Gastrocnemius medialis (tissue), 4 donors: ENCODE measurements at regions of chr12 and their contacts with region 1.

Region 1: DNA sequence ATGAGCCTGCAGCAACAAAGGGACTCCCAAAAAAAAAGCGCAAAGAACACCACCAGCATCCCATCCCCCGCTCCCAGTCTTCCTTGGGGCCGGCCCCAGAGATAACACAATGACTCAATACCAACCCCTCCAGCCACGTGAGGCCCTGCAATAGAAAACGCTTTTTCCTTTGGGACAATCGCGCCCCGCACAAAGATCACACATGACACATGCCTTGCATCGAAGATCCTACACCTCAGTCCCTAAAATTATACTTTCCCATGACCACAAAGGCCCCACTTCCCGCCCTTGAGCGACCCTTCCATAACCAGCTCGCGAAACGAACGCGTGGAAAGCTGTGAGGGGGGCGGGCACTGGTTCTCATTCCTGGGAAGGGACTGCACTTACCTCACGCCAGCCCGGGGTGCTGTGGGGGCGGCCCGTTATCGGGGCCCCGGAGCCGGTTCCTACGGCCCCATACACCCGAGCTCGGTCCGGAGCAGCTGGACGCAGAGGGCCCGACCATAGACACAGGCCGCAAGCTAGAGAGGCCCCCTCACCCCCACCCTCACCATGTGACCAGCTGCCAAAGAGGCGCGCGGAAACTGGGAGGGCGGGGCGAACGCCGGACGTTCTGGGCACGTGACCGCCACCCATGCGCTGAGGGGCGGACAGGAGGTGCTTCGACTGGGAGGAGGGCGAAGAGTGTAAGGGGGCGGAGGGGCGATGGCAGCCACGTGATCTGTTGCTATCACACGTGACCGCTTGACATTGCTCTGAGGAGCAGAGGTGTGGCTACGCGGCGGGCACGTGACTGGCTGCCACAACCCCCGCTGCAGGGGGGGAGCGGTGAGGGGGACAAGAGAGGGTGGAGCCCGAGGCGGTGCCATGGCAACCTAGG is at the start of gene CDK4:
- DNase-seq: peak; percentile 99 to 100
- ATAC-seq: peak; percentile 87 to 88
- H3K4me3 ChIP-seq: peak within 1 kb of the TSS; percentile 74 to 95 (median 80)
- H3K27ac ChIP-seq: peak within 1 kb of the TSS; percentile 94 to 98 (median 96)
- H3K4me1 ChIP-seq: peaks cover 23 to 27% of the 10 kb centered on the region in 2 donors
- H3K27me3 ChIP-seq: no peaks in the 10 kb centered on the region
- CTCF ChIP-seq: peak in 1 of 5 experiments; percentile 24
- POLR2A ChIP-seq: peak; percentile 85 to 90
- total RNA-seq, gene CDK4: 39.7 to 55.5 (median 47.4) TPM

Region 2: DNA sequence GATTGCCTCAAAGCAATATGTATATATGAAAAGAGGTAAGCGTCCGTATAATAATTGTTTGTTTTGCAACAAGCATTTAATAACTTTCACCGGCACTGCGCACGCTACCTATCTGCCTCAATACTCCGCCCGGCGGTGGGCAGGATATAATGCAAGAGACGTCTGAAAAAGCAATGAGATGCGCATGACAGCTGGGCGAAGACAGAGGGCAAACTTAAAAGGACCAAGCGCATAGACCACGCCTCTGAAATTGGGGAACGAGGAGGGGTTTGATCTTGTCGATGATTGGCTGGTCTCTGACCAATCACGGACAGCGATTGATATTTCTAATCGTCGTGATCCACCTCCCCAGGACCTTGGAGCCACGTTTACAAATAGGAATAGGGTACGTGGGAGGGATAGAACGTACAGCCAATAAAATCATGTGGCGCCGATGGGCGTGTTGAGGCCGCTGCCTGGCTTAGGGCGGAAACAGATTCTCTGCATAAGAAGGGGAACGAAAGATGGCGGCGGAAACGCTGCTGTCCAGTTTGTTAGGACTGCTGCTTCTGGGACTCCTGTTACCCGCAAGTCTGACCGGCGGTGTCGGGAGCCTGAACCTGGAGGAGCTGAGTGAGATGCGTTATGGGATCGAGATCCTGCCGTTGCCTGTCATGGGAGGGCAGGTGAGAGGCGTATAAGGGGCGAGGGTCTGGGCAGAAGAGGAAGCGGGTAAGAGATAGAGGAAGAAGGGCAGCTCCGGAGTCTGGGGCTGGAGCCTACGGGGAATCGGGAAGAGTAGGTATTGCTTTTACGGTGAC is 58.2 kb before region 1 on chr12 and contains the start of gene OS9:
- in situ Hi-C with region 1: no loop called
- intact Hi-C with region 1: loop called (anchors 1 kb)
- DNase-seq: peak; percentile 99
- ATAC-seq: peak; percentile 98 to 99
- H3K4me3 ChIP-seq: peak within 1 kb of the TSS; percentile 68 to 97 (median 79)
- H3K27ac ChIP-seq: peak within 1 kb of the TSS; percentile 77 to 90 (median 86)
- H3K4me1 ChIP-seq: peaks cover 7% of the 10 kb centered on the region in 2 donors
- H3K27me3 ChIP-seq: peaks cover 0 to under 1% (median 0%) of the 10 kb centered on the region in 3 donors
- CTCF ChIP-seq: peak; percentile 75 to 84 (median 78)
- POLR2A ChIP-seq: peak; percentile 71 to 73
- total RNA-seq, gene OS9: 77.0 to 152 (median 106) TPM

Region 3: DNA sequence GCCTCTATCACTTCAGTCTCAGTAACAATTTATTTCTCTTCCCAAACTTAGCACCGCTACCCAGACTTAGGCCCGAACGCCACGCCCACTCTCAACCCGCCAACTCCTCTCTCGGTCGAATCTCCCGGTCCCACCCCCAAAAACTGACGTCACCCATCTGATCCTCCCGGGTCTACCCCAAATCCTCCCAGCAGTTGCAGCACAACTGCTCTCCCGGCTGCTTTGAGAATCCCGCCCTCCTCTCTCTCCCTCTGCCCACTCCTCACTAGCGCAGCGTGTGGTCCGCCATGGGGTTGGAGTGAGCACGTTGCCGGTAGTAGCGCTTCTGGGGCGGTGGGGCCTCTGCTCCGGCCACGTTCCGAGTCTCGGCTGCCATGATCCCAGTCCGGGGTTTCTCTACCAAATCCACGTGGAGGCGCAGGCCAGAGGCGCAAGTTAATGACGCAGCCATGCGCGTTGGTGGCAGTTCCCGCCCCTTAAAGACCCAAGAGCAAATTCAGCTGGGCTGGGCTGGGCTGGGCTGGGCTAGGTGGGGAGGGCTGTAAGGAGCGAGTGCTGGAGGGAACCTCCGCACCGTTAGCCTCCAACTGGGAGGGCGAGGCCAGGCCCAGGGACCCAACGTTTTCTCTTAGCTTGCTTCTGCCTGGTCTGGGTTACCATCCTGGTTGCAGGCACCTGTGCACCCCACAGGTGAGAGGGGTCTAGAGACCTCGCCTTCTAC is 19.8 kb after region 1 on chr12 and contains the start of gene METTL1:
- in situ Hi-C with region 1: no loop called
- intact Hi-C with region 1: loop called (anchors 2 kb)
- DNase-seq: peak; percentile 89 to 92
- ATAC-seq: peak; percentile 92 to 97
- H3K4me3 ChIP-seq: peak within 1 kb of the TSS; percentile 79 to 97 (median 90)
- H3K27ac ChIP-seq: peak within 1 kb of the TSS; percentile 84 to 94 (median 87)
- H3K4me1 ChIP-seq: peaks cover 18 to 20% of the 10 kb centered on the region in 2 donors
- H3K27me3 ChIP-seq: peaks cover 2 to 4% (median 4%) of the 10 kb centered on the region in 3 donors
- CTCF ChIP-seq: no peak
- POLR2A ChIP-seq: peak; percentile 44 to 45
- total RNA-seq, gene METTL1: 6.5 to 22.7 (median 17.9) TPM

Region 4: DNA sequence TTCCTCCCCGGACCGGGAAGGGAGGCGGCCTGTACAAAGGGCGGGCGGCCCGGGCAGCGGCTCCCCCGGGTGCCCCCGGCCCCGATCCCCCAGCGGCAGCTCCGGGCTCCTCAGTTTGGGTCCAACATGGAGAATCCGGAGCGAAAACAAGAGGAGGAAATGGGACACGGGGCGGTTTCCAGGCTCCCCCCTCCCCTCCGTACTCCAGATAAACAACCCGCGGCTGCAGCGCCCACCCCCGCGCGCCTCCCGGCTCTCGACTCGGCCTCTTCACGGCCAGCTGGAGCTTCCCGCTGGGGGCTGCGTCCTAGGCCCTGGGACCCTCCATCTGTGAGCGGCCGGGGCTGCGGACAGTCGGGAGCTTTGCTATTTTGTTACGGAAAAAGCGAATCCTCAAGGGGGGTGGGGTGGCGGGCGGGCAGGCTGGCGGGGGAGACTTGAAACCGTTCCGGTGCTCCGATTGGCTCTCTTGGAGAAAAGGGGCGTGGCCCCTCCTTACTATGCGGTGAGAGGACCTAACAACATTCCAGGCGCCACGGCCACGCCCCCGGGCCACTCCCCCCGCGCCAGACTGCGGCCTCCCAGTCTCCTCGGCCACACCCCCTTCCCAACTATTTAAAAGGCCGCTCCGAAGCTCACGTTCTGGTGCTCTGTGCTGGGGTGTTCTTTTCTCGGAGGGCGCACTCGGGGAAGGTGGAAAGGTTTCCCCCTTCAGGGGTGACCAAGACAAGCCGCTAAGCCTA is 94.7 kb after region 1 on chr12 and contains the start of gene CTDSP2:
- in situ Hi-C with region 1: no loop called
- intact Hi-C with region 1: loop called (anchors 2 kb)
- DNase-seq: peak; percentile 100
- ATAC-seq: peak; percentile 58 to 60
- H3K4me3 ChIP-seq: peak within 1 kb of the TSS; percentile 82 to 98 (median 96)
- H3K27ac ChIP-seq: peak within 1 kb of the TSS; percentile 93 to 99 (median 98)
- H3K4me1 ChIP-seq: peaks cover 69% of the 10 kb centered on the region in 2 donors
- H3K27me3 ChIP-seq: no peaks in the 10 kb centered on the region
- CTCF ChIP-seq: peak in 1 of 5 experiments; percentile 24
- POLR2A ChIP-seq: peak; percentile 82 to 98
- total RNA-seq, gene CTDSP2: 66.0 to 116 (median 83.4) TPM